ENCODE measurements at regions of chr20 and their contacts with region 1.

Region 1: DNA sequence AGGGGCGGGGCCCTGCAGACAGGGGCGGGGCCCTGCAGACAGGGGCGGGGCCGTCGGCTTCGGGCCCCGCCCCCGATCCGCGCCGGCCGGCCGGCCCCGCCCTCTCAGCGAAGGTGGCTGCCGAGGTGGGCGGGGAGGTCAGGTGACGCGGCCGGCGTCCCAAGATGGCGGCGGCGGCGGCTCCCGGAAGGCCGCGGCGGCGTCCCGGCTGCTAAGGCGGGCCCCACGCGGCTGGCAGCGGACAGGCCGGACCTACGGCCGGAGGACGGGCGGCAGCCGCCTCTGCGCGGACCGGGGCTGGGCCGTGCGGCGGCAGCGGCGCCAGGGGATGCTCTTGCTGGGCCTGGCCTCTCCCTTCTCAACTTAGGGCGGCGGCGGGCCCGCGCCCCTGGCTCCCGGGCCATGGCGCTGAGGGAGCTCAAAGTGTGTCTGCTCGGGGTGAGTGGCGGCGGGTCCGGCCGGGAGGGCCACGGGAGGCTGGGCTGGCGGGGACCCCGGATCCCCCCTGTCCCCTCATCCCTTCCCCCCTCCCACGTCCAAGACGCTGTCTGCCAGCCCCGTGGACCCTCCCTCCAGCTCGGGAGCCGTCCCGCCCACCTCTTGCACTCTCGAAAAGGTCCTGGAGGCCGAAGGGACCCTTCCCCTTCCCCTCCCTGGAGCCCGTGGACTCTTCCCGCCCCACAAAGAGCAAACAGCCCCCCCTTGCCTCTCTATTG is at the start of gene RAB22A:
- DNase-seq: peak; percentile 56 to 93 (median 78)
- ATAC-seq: peak; percentile 45 to 83 (median 71)
- H3K4me3 ChIP-seq: peak within 1 kb of the TSS; percentile 64 to 74
- H3K4me3 Mint-ChIP-seq: peak within 1 kb of the TSS; percentile 89 to 91 (median 91)
- H3K27ac ChIP-seq: peak within 1 kb of the TSS; percentile 87
- H3K27ac Mint-ChIP-seq: peak within 1 kb of the TSS; percentile 91 to 94
- H3K4me1 ChIP-seq: peaks cover 31 to 61% of the 10 kb centered on the region in 2 experiments
- H3K4me1 Mint-ChIP-seq: peaks cover 63 to 77% (median 67%) of the 10 kb centered on the region in 3 donors
- H3K27me3 ChIP-seq: no peaks in the 10 kb centered on the region
- H3K27me3 Mint-ChIP-seq: no peaks in the 10 kb centered on the region
- total RNA-seq, gene RAB22A: 15.3 to 23.0 (median 20.4) TPM

Region 2: DNA sequence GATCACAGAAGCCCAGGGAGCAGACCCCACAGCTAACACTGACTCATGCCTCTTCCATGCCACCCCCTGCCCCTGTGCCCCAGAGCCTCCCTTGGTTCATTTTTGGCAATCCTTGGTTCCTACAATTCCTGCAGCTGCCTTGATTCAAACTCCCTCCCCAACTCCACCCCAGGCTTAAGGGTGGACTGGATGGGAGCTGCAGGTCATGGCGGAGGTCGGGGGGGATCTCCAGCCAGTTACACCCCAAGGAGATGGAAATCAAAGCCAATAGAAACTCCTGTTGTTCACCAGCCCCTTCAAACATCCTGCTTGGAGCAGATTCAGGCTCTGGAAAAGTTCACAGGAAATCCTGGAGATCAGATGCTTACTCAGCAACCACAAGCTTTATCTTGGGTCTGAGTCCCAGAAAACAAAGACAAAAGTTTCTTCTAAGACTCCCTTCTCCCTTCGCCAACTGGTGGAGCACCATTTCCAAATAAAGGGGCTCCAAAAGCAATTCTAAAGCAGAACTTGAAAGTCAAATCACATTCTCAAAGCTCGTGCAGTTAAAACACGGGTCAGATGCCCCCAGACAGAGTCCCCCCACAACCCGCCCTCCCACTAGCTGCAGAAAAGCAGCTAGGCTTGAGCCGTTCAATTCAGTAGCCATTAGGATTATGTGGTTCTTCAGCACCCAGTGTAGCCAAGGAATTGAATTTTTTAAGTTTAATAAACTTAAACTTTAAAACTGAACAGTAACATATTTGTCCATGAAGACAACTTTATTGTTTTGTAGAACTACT is 230.8 kb before region 1 on chr20:
- CTCF ChIA-PET with region 1: no interaction called
- POLR2A ChIA-PET with region 1: no interaction called
- DNase-seq: no peak
- ATAC-seq: no peak
- H3K4me3 ChIP-seq: no peak overlapping the region
- H3K4me3 Mint-ChIP-seq: no peak overlapping the region
- H3K27ac ChIP-seq: no peak overlapping the region
- H3K27ac Mint-ChIP-seq: no peak overlapping the region
- H3K4me1 ChIP-seq: no peaks in the 10 kb centered on the region
- H3K4me1 Mint-ChIP-seq: peaks cover 6 to 9% (median 8%) of the 10 kb centered on the region in 3 donors
- H3K27me3 ChIP-seq: peaks cover 0 to 17% of the 10 kb centered on the region in 2 experiments
- H3K27me3 Mint-ChIP-seq: peaks cover 12 to 13% of the 10 kb centered on the region in 2 donors

Region 3: DNA sequence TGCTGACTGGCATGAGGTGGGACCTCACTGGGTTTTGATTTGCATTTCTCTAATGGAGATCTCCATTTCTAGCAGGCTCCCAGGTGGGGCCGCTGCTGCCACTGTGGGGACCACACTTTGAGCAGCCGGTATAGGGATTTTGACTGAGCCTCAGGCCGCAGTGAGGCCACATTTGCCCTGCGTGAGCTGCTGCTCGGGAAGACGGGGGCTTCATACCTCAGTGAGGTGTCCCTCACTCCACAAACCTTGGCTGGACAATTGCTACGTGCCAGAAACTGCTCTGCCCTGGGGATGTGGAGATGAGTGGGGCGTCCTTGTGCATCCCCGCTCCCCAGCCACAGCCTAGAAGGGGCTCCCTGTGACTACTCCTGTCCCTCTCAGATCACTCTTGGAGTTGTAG is 215.6 kb before region 1 on chr20:
- CTCF ChIA-PET with region 1: no interaction called
- POLR2A ChIA-PET with region 1: no interaction called
- DNase-seq: no peak
- ATAC-seq: no peak
- H3K4me3 ChIP-seq: no peak overlapping the region
- H3K4me3 Mint-ChIP-seq: no peak overlapping the region
- H3K27ac ChIP-seq: no peak overlapping the region
- H3K27ac Mint-ChIP-seq: no peak overlapping the region
- H3K4me1 ChIP-seq: no peaks in the 10 kb centered on the region
- H3K4me1 Mint-ChIP-seq: no peaks in the 10 kb centered on the region
- H3K27me3 ChIP-seq: peaks cover 0 to 23% of the 10 kb centered on the region in 2 experiments
- H3K27me3 Mint-ChIP-seq: peaks cover 11 to 19% of the 10 kb centered on the region in 2 donors

Region 4: DNA sequence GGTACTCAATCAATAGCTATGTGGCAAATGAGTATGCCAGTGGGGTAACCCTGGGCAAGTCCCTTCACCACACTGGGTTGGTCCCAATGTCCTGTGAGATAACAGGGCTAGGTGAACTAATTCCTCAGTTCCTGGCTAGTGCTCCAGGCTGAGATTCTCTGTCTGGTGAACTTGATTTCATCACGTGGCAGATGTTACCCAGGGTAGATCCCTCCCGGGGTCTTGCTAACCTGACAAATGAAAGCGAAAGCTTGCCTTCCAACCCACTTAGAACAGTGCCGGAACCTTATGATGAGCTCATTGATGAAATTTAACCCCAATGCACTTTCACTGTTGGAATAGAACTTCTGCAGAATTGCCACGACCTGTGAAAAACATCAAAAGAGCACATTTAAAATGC is 74.7 kb before region 1 on chr20:
- CTCF ChIA-PET with region 1: interaction called in 1 of 2 experiments, 4 read pairs
- POLR2A ChIA-PET with region 1: interaction called, 6 to 10 read pairs
- DNase-seq: peak in 1 of 35 experiments; percentile 31
- ATAC-seq: no peak
- H3K4me3 ChIP-seq: no peak overlapping the region
- H3K4me3 Mint-ChIP-seq: no peak overlapping the region
- H3K27ac ChIP-seq: no peak overlapping the region
- H3K27ac Mint-ChIP-seq: no peak overlapping the region
- H3K4me1 ChIP-seq: peaks cover 2 to 4% of the 10 kb centered on the region in 2 experiments
- H3K4me1 Mint-ChIP-seq: peaks cover 11 to 19% (median 15%) of the 10 kb centered on the region in 3 donors
- H3K27me3 ChIP-seq: peaks cover 0 to 3% of the 10 kb centered on the region in 2 experiments
- H3K27me3 Mint-ChIP-seq: peaks cover 4 to 7% of the 10 kb centered on the region in 2 donors

Region 5: DNA sequence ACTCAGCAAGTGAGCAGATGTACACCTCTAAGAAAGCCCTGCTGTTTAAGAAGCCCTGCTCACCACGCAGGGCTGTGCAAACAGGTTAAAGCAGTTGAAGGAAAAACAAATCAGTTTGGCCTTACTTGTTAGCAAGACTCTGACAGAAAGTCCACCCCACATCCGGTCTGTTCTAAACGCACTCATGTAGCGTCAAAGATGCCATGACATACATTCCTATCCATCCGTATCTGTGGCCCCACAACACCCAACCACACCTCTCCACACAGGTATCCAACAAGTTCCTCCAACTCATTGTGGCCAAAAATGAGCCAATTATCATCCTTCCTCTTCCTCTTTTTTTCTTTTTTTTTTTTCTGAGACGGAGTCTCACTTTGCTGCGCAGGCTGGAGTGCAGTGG is 23.0 kb before region 1 on chr20:
- CTCF ChIA-PET with region 1: no interaction called
- POLR2A ChIA-PET with region 1: no interaction called
- DNase-seq: no peak
- ATAC-seq: peak in 2 of 4 experiments; percentile 9 to 32
- H3K4me3 ChIP-seq: no peak overlapping the region
- H3K4me3 Mint-ChIP-seq: no peak overlapping the region
- H3K27ac ChIP-seq: no peak overlapping the region
- H3K27ac Mint-ChIP-seq: peak overlapping the region in 1 of 2 donors; percentile 70
- H3K4me1 ChIP-seq: peaks cover 0 to 3% of the 10 kb centered on the region in 2 experiments
- H3K4me1 Mint-ChIP-seq: peaks cover 13 to 29% (median 26%) of the 10 kb centered on the region in 3 donors
- H3K27me3 ChIP-seq: no peaks in the 10 kb centered on the region
- H3K27me3 Mint-ChIP-seq: no peaks in the 10 kb centered on the region

Region 6: GRCh38 chr20:58388882-58389323 is 79.2 kb after region 1 on chr20 and contains the start of gene VAPB:
- CTCF ChIA-PET with region 1: interaction called in 1 of 2 experiments, 8 read pairs
- POLR2A ChIA-PET with region 1: interaction called in 1 of 2 experiments, 22 read pairs
- DNase-seq: peak; percentile 91 to 99 (median 96)
- ATAC-seq: peak; percentile 97 to 99 (median 99)
- H3K4me3 ChIP-seq: peak within 1 kb of the TSS; percentile 80 to 92
- H3K4me3 Mint-ChIP-seq: peak within 1 kb of the TSS; percentile 82 to 94 (median 91)
- H3K27ac ChIP-seq: peak within 1 kb of the TSS; percentile 99
- H3K27ac Mint-ChIP-seq: peak within 1 kb of the TSS; percentile 92 to 93
- H3K4me1 ChIP-seq: peaks cover 19 to 32% of the 10 kb centered on the region in 2 experiments
- H3K4me1 Mint-ChIP-seq: peaks cover 40 to 52% (median 44%) of the 10 kb centered on the region in 3 donors
- H3K27me3 ChIP-seq: peaks cover 0 to 12% of the 10 kb centered on the region in 2 experiments
- H3K27me3 Mint-ChIP-seq: peaks cover 3 to 5% of the 10 kb centered on the region in 2 donors
- total RNA-seq, gene VAPB: 26.4 to 35.0 (median 30.8) TPM

Measured in T-cell (primary cell).